ENCODE measurements at regions of chr1 and their contacts with region 1.

Region 1: DNA sequence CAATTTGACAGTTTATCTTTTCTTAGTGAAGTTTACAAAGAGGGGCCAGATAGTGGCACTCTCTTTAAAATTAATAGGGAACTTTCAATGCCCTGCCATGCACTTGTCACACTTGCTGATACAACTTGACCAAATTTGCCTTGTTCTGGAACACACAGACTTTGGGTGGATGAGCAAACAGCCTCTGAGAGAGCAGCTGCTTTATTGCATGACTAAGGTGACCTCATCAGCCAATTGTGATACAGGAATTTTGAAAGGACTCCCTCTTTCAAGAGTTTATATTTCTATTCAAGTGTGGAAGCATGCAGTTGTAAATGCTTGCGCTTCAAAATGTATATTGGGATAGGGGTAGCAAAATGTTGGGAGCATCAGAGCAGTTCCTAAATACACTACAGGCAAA is 2.1 kb upstream of the RGS1 start:
- DNase-seq: no peak
- ATAC-seq: no peak
- H3K4me3 ChIP-seq: no peak overlapping the region
- H3K4me3 Mint-ChIP-seq: peak overlapping the region in 3 of 10 donors; percentile 11 to 53 (median 49)
- H3K27ac ChIP-seq: no peak overlapping the region
- H3K27ac Mint-ChIP-seq: peak overlapping the region in 7 of 9 donors; percentile 17 to 84 (median 49)
- H3K4me1 ChIP-seq: peaks cover 23 to 45% of the 10 kb centered on the region in 2 donors
- H3K4me1 Mint-ChIP-seq: peaks cover 23 to 75% (median 61%) of the 10 kb centered on the region in 7 donors
- H3K27me3 ChIP-seq: no peaks in the 10 kb centered on the region
- H3K27me3 Mint-ChIP-seq: no peaks in the 10 kb centered on the region

Region 2: GRCh38 chr1:192327997-192328396 is 245.5 kb before region 1 on chr1:
- CTCF ChIA-PET with region 1: no interaction called
- POLR2A ChIA-PET with region 1: no interaction called
- intact Hi-C with region 1: no loop called
- DNase-seq: no peak
- ATAC-seq: no peak
- H3K4me3 ChIP-seq: no peak overlapping the region
- H3K4me3 Mint-ChIP-seq: no peak overlapping the region
- H3K27ac ChIP-seq: no peak overlapping the region
- H3K27ac Mint-ChIP-seq: no peak overlapping the region
- H3K4me1 ChIP-seq: no peaks in the 10 kb centered on the region
- H3K4me1 Mint-ChIP-seq: no peaks in the 10 kb centered on the region
- H3K27me3 ChIP-seq: no peaks in the 10 kb centered on the region
- H3K27me3 Mint-ChIP-seq: no peaks in the 10 kb centered on the region

Region 3: GRCh38 chr1:192559115-192560006 is 14.1 kb before region 1 on chr1:
- CTCF ChIA-PET with region 1: no interaction called
- POLR2A ChIA-PET with region 1: no interaction called
- intact Hi-C with region 1: loop called in 1 of 2 experiments (anchors 2 kb)
- DNase-seq: no peak
- ATAC-seq: no peak
- H3K4me3 ChIP-seq: no peak overlapping the region
- H3K4me3 Mint-ChIP-seq: no peak overlapping the region
- H3K27ac ChIP-seq: no peak overlapping the region
- H3K27ac Mint-ChIP-seq: peak overlapping the region in 2 of 9 donors; percentile 35 to 56
- H3K4me1 ChIP-seq: peaks cover 0 to 16% of the 10 kb centered on the region in 2 donors
- H3K4me1 Mint-ChIP-seq: peaks cover 5 to 18% (median 7%) of the 10 kb centered on the region in 7 donors
- H3K27me3 ChIP-seq: no peaks in the 10 kb centered on the region
- H3K27me3 Mint-ChIP-seq: no peaks in the 10 kb centered on the region

Measured in naive thymus-derived CD4-positive, alpha-beta T cell (primary cell).